Naive thymus-derived CD4-positive, alpha-beta T cell (primary cell): ENCODE measurements at regions of chr9 and their contacts with region 1.

Region 1: GRCh38 chr9:83698976-83699585 is 8.7 kb downstream of the UBQLN1 start:
- DNase-seq: no peak
- ATAC-seq: no peak
- H3K4me3 ChIP-seq: no peak overlapping the region
- H3K4me3 Mint-ChIP-seq: peak overlapping the region in 8 of 10 donors; percentile 12 to 69 (median 28)
- H3K27ac ChIP-seq: no peak overlapping the region
- H3K27ac Mint-ChIP-seq: peak overlapping the region in 1 of 9 donors; percentile 21
- H3K4me1 ChIP-seq: peaks cover 21 to 31% of the 10 kb centered on the region in 2 donors
- H3K4me1 Mint-ChIP-seq: peaks cover 42 to 91% (median 75%) of the 10 kb centered on the region in 7 donors
- H3K27me3 ChIP-seq: no peaks in the 10 kb centered on the region
- H3K27me3 Mint-ChIP-seq: no peaks in the 10 kb centered on the region

Region 2: GRCh38 chr9:83688921-83689320 is 10.2 kb before region 1 on chr9:
- CTCF ChIA-PET with region 1: no interaction called
- POLR2A ChIA-PET with region 1: no interaction called
- intact Hi-C with region 1: loop called in 1 of 2 experiments (anchors 1 kb)
- DNase-seq: no peak
- ATAC-seq: no peak
- H3K4me3 ChIP-seq: no peak overlapping the region
- H3K4me3 Mint-ChIP-seq: peak overlapping the region in 6 of 10 donors; percentile 20 to 64 (median 60)
- H3K27ac ChIP-seq: no peak overlapping the region
- H3K27ac Mint-ChIP-seq: peak overlapping the region in 5 of 9 donors; percentile 25 to 76 (median 61)
- H3K4me1 ChIP-seq: peaks cover 14 to 17% of the 10 kb centered on the region in 2 donors
- H3K4me1 Mint-ChIP-seq: peaks cover 50 to 86% (median 79%) of the 10 kb centered on the region in 7 donors
- H3K27me3 ChIP-seq: no peaks in the 10 kb centered on the region
- H3K27me3 Mint-ChIP-seq: no peaks in the 10 kb centered on the region

Region 3: GRCh38 chr9:84404095-84404686 is 705.1 kb after region 1 on chr9:
- CTCF ChIA-PET with region 1: no interaction called
- POLR2A ChIA-PET with region 1: no interaction called
- intact Hi-C with region 1: no loop called
- DNase-seq: no peak
- ATAC-seq: no peak
- H3K4me3 ChIP-seq: no peak overlapping the region
- H3K4me3 Mint-ChIP-seq: no peak overlapping the region
- H3K27ac ChIP-seq: no peak overlapping the region
- H3K27ac Mint-ChIP-seq: no peak overlapping the region
- H3K4me1 ChIP-seq: no peaks in the 10 kb centered on the region
- H3K4me1 Mint-ChIP-seq: peaks cover 0 to 2% (median 0%) of the 10 kb centered on the region in 7 donors
- H3K27me3 ChIP-seq: no peaks in the 10 kb centered on the region
- H3K27me3 Mint-ChIP-seq: peaks cover 0 to 4% (median 0%) of the 10 kb centered on the region in 5 donors